ENCODE measurements at regions of chr20 and their contacts with region 1.

Region 1: GRCh38 chr20:31849455-31849925 is 4.1 kb upstream of the FOXS1 start:
- DNase-seq: peak; percentile 48
- H3K4me3 ChIP-seq: no peak overlapping the region
- H3K27ac ChIP-seq: no peak overlapping the region
- H3K4me1 ChIP-seq: peaks cover 0 to 4% of the 10 kb centered on the region in 2 experiments; a peak in 2 of 4 replicates
- H3K27me3 ChIP-seq: no peaks in the 10 kb centered on the region; the same call in 1 of the 2 replicates
- CTCF ChIP-seq: no peak
- EP300 ChIP-seq: no peak
- RAD21 ChIP-seq: no peak

Region 2: GRCh38 chr20:31835977-31836852 is 13.3 kb before region 1 on chr20:
- CTCF ChIA-PET with region 1: interaction called, 75 read pairs
- POLR2A ChIA-PET with region 1: interaction called, 4 read pairs
- DNase-seq: peak; percentile 57
- H3K4me3 ChIP-seq: no peak overlapping the region
- H3K27ac ChIP-seq: peak overlapping the region; percentile 62 to 88; a peak in 3 of 4 replicates
- H3K4me1 ChIP-seq: peaks cover 37 to 51% of the 10 kb centered on the region in 2 experiments
- H3K27me3 ChIP-seq: no peaks in the 10 kb centered on the region
- CTCF ChIP-seq: no peak
- EP300 ChIP-seq: peak in 1 of 2 experiments; percentile 94; a peak in 3 of 4 replicates
- RAD21 ChIP-seq: no peak

Region 3: DNA sequence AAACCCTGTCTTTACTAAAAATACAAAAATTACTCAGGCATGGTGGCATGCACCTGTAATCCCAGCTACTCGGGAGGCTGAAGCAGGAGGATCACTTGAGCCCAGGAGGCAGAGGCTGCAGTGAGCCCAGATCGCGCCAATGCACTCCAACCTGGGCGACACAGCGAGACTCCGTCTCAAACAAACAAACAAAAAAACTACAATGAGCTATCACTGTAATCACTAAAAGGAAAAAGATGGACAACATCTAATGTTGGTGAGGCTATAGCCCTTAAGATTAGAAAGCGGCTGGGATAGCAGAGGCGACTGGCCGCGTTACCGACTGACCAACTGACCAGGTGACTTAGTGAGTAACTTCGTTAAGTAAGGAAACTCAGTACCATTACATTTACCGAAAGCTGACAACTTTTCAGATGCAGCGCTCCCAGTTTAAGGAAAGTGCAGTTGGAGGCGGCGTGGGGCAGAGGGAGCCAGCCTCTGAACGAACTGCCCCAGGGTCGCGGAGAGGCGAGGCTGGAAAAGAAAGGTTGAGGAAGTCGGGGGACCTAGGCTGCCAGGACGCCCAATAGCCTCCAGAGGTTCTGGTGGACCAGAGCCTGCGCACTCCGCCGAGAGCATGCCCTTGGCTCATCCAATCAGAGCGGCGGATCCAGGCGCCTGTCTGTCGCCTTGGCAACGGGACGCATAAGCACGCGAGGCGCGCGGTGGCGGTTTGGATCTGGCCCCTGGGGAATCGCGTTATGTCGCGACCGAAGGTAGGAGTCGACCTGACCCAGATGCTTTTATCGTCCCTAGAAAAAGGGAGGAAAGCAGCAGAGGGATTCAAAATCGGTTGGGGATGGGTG is 29.9 kb after region 1 on chr20:
- CTCF ChIA-PET with region 1: interaction called, 13 read pairs
- POLR2A ChIA-PET with region 1: no interaction called
- DNase-seq: peak; percentile 93
- H3K4me3 ChIP-seq: peak overlapping the region; percentile 65 to 68
- H3K27ac ChIP-seq: peak overlapping the region; percentile 56 to 64
- H3K4me1 ChIP-seq: no peaks in the 10 kb centered on the region; a peak in 1 of 4 replicates
- H3K27me3 ChIP-seq: no peaks in the 10 kb centered on the region
- CTCF ChIP-seq: no peak
- EP300 ChIP-seq: no peak
- RAD21 ChIP-seq: peak; percentile 13; the same call in 1 of the 2 replicates

Region 4: GRCh38 chr20:31951530-31952453 is 102.3 kb after region 1 on chr20 and contains the start of gene PDRG1:
- CTCF ChIA-PET with region 1: interaction called, 158 read pairs
- POLR2A ChIA-PET with region 1: interaction called, 5 read pairs
- DNase-seq: peak; percentile 98
- H3K4me3 ChIP-seq: peak within 1 kb of the TSS; percentile 88 to 91
- H3K27ac ChIP-seq: peak within 1 kb of the TSS; percentile 40 to 75; a peak in 3 of 4 replicates
- H3K4me1 ChIP-seq: peaks cover 7 to 12% of the 10 kb centered on the region in 2 experiments; a peak in 3 of 4 replicates
- H3K27me3 ChIP-seq: no peaks in the 10 kb centered on the region
- CTCF ChIP-seq: peak; percentile 90
- EP300 ChIP-seq: no peak
- RAD21 ChIP-seq: peak; percentile 91
- polyA plus RNA-seq, gene PDRG1: 18.9 and 19.7 TPM in 2 replicates

Region 5: DNA sequence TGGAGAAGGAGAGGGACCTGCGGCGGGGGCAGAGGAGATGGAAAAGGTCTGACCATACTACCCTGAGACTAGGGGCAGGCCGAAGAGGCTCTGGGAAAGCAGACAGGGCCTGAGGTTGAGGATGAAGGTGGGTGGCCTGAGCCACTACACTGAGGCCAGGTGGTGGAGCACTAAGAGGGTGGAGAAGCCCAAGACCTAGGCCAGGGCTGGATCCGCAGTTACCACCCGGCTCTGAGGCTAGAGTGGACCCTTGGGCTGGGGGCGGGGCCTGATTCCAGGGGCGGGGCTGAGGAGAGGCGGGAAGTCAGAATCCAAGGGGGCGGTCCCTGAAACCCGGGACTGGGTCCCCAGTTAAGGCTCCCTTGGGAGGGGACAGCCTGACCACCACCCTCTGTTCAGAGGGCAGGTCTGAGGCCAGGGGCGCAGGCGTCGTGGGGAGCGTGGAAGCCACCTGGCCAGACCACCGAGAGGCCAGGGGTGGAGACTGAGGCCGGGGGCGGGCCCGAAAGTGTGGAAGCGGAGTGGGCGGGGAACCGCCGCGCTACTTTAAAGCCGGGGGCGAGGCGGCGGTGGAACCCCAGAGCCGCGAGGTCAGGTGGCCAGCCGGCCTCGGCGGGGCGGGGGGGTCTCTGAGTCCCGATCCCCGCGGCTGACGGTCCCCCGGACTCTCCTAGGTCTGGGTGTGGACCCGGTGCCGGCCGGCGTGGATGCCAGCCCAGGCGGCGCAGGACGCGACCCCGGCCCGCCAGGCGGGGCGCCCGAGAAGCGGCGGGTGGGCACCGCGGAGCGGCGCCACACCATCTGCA is 169.0 kb after region 1 on chr20:
- CTCF ChIA-PET with region 1: interaction called, 11 read pairs
- POLR2A ChIA-PET with region 1: no interaction called
- DNase-seq: peak; percentile 96
- H3K4me3 ChIP-seq: peak overlapping the region; percentile 46 to 54
- H3K27ac ChIP-seq: no peak overlapping the region
- H3K4me1 ChIP-seq: peaks cover 0 to 13% of the 10 kb centered on the region in 2 experiments; a peak in 1 of 4 replicates
- H3K27me3 ChIP-seq: peaks cover 61% of the 10 kb centered on the region
- CTCF ChIP-seq: no peak
- EP300 ChIP-seq: no peak
- RAD21 ChIP-seq: no peak

Region 6: DNA sequence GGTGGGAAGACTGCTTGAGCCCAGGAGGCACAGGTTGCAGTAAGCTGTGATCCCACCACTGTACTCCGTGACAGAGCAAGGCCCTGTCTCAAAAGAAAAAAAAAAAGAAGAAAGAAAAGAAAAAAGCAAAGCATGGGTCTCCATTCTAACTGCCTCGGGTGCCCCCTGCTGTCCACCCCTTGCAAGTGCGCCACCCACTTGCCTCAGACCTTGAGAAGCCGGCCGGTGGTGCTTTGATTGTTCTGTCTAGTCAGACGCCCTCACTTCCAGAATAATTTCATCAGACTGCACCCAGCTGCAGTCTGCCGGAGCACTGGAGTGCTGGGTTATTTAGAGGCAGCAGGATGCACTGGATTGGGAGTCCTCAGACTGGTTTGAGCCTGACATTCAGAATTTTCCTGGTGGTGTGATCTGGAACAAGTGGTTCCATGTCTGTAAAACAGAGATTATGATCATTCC is 242.4 kb after region 1 on chr20:
- CTCF ChIA-PET with region 1: interaction called, 16 read pairs
- POLR2A ChIA-PET with region 1: no interaction called
- DNase-seq: peak; percentile 82
- H3K4me3 ChIP-seq: peak overlapping the region in 1 of 2 experiments; percentile 50; a peak in 1 of 4 replicates
- H3K27ac ChIP-seq: no peak overlapping the region
- H3K4me1 ChIP-seq: no peaks in the 10 kb centered on the region; a peak in 1 of 4 replicates
- H3K27me3 ChIP-seq: peaks cover 10% of the 10 kb centered on the region; the same call in 1 of the 2 replicates
- CTCF ChIP-seq: peak; percentile 95
- EP300 ChIP-seq: no peak
- RAD21 ChIP-seq: peak; percentile 75